ENCODE measurements at regions of chr9 and their contacts with region 1.

Region 1: DNA sequence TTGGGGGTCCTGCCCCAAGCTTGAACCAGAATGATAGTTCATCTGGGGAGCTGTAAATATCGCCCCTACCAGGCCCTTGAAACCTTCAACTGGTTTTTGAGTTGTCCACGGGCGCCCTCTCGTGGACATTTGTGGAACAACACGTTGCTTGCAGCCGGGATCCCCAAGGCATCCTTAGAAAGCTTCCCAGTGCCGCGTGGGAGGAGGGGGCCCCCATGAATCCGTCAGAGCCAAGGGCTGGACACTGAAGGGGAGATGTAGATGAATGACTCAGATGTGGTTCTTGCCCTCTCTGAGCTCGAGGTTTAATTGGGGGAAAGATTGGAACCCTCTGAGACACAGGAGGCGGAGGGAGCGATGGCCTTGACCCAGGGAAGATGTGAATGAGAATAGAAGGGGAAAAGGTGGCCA is 31.8 kb upstream of the ORM1 start:
- DNase-seq: peak; percentile 46 to 83 (median 69)
- ATAC-seq: peak; percentile 48
- H3K4me3 ChIP-seq: no peak overlapping the region
- H3K4me3 Mint-ChIP-seq: no peak overlapping the region
- H3K27ac ChIP-seq: no peak overlapping the region
- H3K27ac Mint-ChIP-seq: no peak overlapping the region
- H3K4me1 ChIP-seq: no peaks in the 10 kb centered on the region
- H3K4me1 Mint-ChIP-seq: no peaks in the 10 kb centered on the region
- H3K27me3 ChIP-seq: peaks cover 0 to 3% of the 10 kb centered on the region in 2 experiments
- H3K27me3 Mint-ChIP-seq: peaks cover 5% of the 10 kb centered on the region
- CTCF ChIP-seq: peak; percentile 92

Region 2: DNA sequence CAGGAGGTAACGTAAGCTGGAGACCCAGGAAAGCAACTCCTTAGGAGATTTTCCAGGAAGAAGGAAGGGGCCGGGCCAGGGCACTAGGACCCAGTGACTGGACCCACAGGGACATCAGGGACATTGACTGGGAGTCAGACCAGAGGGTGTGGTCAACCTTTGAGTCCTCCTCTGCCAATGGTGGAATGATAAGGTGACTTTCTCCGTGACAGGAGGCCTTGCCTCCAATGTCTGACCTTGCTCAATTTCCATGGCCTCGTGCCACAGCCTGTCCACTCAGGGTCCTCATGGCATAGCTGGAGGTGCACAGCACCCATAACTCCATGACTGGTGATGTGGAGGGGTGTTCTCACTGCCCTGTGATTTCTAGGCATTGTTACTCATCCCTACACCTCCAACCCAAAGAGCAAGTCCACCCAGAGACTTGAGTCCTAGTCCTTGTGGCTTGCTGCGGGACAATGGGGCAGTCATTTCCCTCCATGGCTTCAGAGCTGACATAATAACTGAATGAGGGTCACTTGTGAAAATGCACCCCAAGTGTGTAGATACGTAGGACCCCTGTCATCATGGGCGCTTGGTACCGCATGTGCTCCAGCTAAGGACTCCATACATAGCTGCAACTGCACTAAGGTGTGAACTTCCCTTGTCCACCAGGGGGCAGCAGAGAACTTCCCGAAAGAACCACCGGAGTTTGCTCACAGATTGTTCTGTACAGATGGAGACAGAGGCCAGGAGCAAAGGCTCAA is 208.9 kb before region 1 on chr9:
- CTCF ChIA-PET with region 1: interaction called, 20 read pairs
- POLR2A ChIA-PET with region 1: no interaction called
- intact Hi-C with region 1: loop called in 1 of 2 experiments (anchors 1 kb)
- DNase-seq: peak; percentile 59 to 85 (median 77)
- ATAC-seq: peak; percentile 54
- H3K4me3 ChIP-seq: no peak overlapping the region
- H3K4me3 Mint-ChIP-seq: no peak overlapping the region
- H3K27ac ChIP-seq: no peak overlapping the region
- H3K27ac Mint-ChIP-seq: no peak overlapping the region
- H3K4me1 ChIP-seq: no peaks in the 10 kb centered on the region
- H3K4me1 Mint-ChIP-seq: no peaks in the 10 kb centered on the region
- H3K27me3 ChIP-seq: no peaks in the 10 kb centered on the region
- H3K27me3 Mint-ChIP-seq: peaks cover under 1% of the 10 kb centered on the region
- CTCF ChIP-seq: peak; percentile 87

Region 3: DNA sequence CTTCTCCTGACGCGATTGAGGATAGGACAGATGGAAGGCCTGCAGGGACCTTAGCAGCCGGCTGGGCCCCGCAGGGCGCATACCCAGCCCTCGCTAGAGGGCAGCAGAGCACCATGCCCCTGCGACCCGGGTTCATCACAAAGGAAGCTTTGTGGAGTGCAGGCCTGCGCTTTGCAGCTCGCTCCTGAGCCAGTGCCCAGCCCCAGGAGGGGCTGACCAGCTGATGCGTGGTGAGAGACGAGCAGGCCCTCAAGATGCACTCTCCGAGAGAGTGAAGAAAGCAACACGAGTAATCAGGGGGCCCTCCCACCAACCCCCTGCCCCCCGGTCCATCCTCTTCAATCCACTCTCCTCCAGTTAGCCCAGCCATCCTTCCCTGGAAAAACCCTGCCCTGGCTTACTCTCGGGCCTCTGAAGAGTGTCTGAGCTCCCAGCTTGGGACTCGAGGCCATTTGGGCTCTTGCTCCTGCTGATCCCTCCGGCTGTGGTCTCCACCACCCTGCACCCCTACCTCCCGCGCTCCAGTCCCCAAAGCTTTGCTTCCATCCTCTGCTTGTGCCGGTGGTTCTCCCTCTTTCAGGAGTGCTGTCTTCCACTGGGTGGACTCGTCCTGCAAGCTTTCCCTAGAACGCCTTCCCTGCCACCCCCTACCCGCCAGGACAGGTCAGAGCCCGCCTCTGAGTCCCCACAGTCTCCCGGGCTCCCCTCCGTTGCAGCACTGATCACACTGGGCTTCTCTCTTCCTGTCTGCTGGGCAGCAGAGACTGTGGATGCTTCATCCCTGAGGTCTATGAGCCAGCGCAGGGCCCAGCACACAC is 182.8 kb before region 1 on chr9:
- CTCF ChIA-PET with region 1: interaction called, 29 read pairs
- POLR2A ChIA-PET with region 1: interaction called, 3 read pairs
- intact Hi-C with region 1: loop called (anchors 1 kb)
- DNase-seq: peak in 8 of 9 experiments; percentile 8 to 62 (median 40)
- ATAC-seq: peak; percentile 48
- H3K4me3 ChIP-seq: no peak overlapping the region
- H3K4me3 Mint-ChIP-seq: no peak overlapping the region
- H3K27ac ChIP-seq: no peak overlapping the region
- H3K27ac Mint-ChIP-seq: no peak overlapping the region
- H3K4me1 ChIP-seq: no peaks in the 10 kb centered on the region
- H3K4me1 Mint-ChIP-seq: no peaks in the 10 kb centered on the region
- H3K27me3 ChIP-seq: peaks cover 0 to under 1% of the 10 kb centered on the region in 2 experiments
- H3K27me3 Mint-ChIP-seq: peaks cover 10% of the 10 kb centered on the region
- CTCF ChIP-seq: peak; percentile 58

Region 4: DNA sequence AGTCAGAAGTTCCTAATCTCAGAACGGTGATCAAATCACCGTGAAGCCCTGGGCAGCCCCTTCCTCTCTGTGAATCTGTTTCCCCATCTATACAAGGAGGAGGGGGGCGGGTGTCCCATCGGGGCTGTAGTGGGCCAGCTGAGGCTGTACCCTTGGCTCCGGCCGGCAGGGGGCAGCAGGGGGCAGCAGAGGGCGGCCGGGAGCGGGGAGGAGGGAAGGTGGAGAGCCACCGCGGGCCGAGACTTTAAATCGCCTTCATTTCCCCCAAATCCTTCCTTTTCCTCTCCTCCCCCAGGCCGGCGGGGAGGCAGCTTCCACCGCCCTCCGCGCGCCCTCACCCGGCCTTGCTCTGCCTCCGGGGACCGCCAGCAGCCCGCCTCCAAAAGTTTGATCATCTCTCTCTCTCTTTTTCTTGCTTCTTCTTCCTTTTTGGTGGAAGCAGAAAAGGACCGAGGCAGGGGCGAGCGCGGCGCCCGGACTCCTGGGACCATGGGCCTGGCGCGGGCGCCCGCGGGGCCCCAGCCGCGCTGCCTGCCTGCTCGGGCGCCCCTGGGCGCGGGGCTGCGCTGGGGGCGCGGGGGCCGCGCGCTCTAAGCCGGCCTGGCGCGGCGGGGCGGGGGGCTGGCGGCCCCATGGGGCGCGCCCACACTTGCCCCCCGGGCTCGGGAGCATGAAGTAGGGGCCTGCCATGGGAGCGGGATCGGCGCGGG is 135.7 kb before region 1 on chr9 and contains the start of gene COL27A1:
- CTCF ChIA-PET with region 1: interaction called, 19 read pairs
- POLR2A ChIA-PET with region 1: no interaction called
- intact Hi-C with region 1: loop called in 1 of 2 experiments (anchors 1 kb)
- DNase-seq: peak; percentile 60 to 86 (median 75)
- ATAC-seq: peak; percentile 87
- H3K4me3 ChIP-seq: peak within 1 kb of the TSS; percentile 39 to 45
- H3K4me3 Mint-ChIP-seq: peak within 1 kb of the TSS; percentile 91
- H3K27ac ChIP-seq: no peak within 1 kb of the TSS
- H3K27ac Mint-ChIP-seq: peak within 1 kb of the TSS; percentile 19
- H3K4me1 ChIP-seq: peaks cover 19% of the 10 kb centered on the region
- H3K4me1 Mint-ChIP-seq: peaks cover 21% of the 10 kb centered on the region
- H3K27me3 ChIP-seq: peaks cover 8 to 19% of the 10 kb centered on the region in 2 experiments
- H3K27me3 Mint-ChIP-seq: peaks cover 46% of the 10 kb centered on the region
- CTCF ChIP-seq: peak; percentile 78
- total RNA-seq, gene COL27A1: 0.35 to 0.36 TPM

Region 5: GRCh38 chr9:114163517-114163951 is 127.5 kb before region 1 on chr9:
- CTCF ChIA-PET with region 1: interaction called, 11 read pairs
- POLR2A ChIA-PET with region 1: no interaction called
- intact Hi-C with region 1: no loop called
- DNase-seq: no peak
- ATAC-seq: no peak
- H3K4me3 ChIP-seq: no peak overlapping the region
- H3K4me3 Mint-ChIP-seq: no peak overlapping the region
- H3K27ac ChIP-seq: no peak overlapping the region
- H3K27ac Mint-ChIP-seq: no peak overlapping the region
- H3K4me1 ChIP-seq: no peaks in the 10 kb centered on the region
- H3K4me1 Mint-ChIP-seq: no peaks in the 10 kb centered on the region
- H3K27me3 ChIP-seq: no peaks in the 10 kb centered on the region
- H3K27me3 Mint-ChIP-seq: peaks cover 13% of the 10 kb centered on the region
- CTCF ChIP-seq: no peak

Region 6: DNA sequence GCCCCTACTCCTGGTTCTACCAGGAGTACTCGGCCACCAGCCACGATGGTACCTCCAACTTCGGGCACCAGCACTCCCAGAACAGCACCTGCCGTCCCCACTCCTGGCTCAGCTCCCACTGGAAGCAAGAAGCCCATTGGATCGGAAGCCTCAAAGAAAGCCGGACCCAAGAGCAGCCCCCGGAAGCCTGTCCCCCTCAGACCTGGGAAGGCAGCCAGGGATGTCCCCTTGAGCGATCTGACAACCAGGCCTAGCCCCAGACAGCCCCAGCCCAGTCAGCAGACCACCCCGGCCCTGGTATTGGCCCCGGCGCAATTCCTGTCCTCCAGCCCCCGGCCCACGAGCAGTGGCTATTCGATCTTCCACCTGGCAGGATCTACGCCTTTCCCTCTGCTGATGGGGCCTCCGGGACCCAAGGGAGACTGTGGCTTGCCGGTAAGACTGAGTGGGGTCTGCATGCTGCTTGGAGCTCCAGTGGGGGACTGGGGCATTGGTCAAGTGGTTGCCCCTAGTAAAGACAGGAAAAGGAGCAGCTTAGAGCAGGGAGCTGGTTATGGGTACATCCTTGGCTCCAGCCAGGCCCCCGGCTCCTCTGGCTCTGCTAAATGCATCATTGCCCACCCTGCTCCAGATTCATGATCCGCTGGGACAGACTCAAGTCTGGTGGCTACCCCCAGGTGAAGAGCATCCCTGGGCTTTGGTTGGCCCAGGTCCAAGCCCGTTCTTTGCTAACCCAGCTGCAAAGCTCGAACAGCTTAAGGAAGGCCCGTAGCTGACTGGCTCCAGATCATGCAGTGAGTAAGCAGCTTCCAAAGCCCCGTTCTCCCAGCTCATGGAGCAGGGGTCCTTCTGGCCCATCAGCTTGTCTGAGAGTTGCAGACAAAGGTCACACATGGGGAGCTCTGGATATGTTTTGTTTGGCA is 121.8 kb before region 1 on chr9:
- CTCF ChIA-PET with region 1: interaction called, 11 read pairs
- POLR2A ChIA-PET with region 1: no interaction called
- intact Hi-C with region 1: no loop called
- DNase-seq: no peak
- ATAC-seq: no peak
- H3K4me3 ChIP-seq: no peak overlapping the region
- H3K4me3 Mint-ChIP-seq: no peak overlapping the region
- H3K27ac ChIP-seq: no peak overlapping the region
- H3K27ac Mint-ChIP-seq: no peak overlapping the region
- H3K4me1 ChIP-seq: no peaks in the 10 kb centered on the region
- H3K4me1 Mint-ChIP-seq: no peaks in the 10 kb centered on the region
- H3K27me3 ChIP-seq: no peaks in the 10 kb centered on the region
- H3K27me3 Mint-ChIP-seq: peaks cover 6% of the 10 kb centered on the region
- CTCF ChIP-seq: no peak

Region 7: GRCh38 chr9:114275246-114276004 is 15.6 kb before region 1 on chr9:
- CTCF ChIA-PET with region 1: interaction called, 16 read pairs
- POLR2A ChIA-PET with region 1: no interaction called
- intact Hi-C with region 1: no loop called
- DNase-seq: no peak
- ATAC-seq: no peak
- H3K4me3 ChIP-seq: no peak overlapping the region
- H3K4me3 Mint-ChIP-seq: no peak overlapping the region
- H3K27ac ChIP-seq: no peak overlapping the region
- H3K27ac Mint-ChIP-seq: no peak overlapping the region
- H3K4me1 ChIP-seq: no peaks in the 10 kb centered on the region
- H3K4me1 Mint-ChIP-seq: no peaks in the 10 kb centered on the region
- H3K27me3 ChIP-seq: no peaks in the 10 kb centered on the region
- H3K27me3 Mint-ChIP-seq: peaks cover 3% of the 10 kb centered on the region
- CTCF ChIP-seq: no peak

Measured in CD8-positive, alpha-beta T cell (primary cell).